B cell (primary cell): ENCODE measurements at regions of chr4 and their contacts with region 1.

Region 1: GRCh38 chr4:187321711-187322110 is 598.1 kb upstream of the FAT1 start:
- DNase-seq: no peak
- ATAC-seq: no peak
- H3K4me3 ChIP-seq: no peak overlapping the region
- H3K4me3 Mint-ChIP-seq: no peak overlapping the region
- H3K27ac ChIP-seq: no peak overlapping the region
- H3K27ac Mint-ChIP-seq: no peak overlapping the region
- H3K4me1 ChIP-seq: no peaks in the 10 kb centered on the region
- H3K4me1 Mint-ChIP-seq: no peaks in the 10 kb centered on the region
- H3K27me3 ChIP-seq: no peaks in the 10 kb centered on the region
- H3K27me3 Mint-ChIP-seq: no peaks in the 10 kb centered on the region
- CTCF ChIP-seq: no peak

Region 2: DNA sequence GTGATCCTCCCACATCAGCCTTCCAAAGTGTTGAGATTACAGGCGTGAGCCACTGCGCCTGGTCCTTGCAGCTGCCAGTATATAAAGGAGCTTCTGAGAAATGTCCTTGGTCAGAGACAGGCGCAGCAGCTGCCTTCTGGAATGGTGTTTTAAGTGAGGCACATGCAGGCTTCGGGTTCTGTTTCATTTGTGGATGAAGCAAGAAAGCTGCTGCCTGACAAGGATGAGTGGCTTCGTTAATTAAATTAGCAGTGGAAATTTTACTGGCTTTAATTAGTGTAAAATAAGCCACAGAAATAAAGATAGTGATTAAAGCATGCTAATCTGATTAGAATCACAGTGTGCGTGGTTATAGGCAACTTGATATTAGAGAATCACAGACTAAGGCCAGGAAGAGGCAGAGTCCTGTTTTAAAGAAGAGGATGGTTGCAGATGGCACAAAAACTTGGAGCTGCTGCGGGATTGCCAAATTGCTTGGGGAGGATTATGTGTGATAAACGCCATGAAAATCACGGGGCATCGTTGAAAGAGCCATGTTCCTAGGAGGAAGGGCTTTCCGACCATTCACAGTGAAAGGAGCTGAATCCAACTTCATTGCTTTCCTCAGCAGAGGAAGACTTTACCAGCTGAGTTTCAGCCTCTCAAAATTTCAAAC is 249.6 kb before region 1 on chr4:
- CTCF ChIA-PET with region 1: no interaction called
- POLR2A ChIA-PET with region 1: no interaction called
- intact Hi-C with region 1: no loop called
- DNase-seq: no peak
- ATAC-seq: no peak
- H3K4me3 ChIP-seq: no peak overlapping the region
- H3K4me3 Mint-ChIP-seq: no peak overlapping the region
- H3K27ac ChIP-seq: no peak overlapping the region
- H3K27ac Mint-ChIP-seq: no peak overlapping the region
- H3K4me1 ChIP-seq: no peaks in the 10 kb centered on the region
- H3K4me1 Mint-ChIP-seq: no peaks in the 10 kb centered on the region
- H3K27me3 ChIP-seq: no peaks in the 10 kb centered on the region
- H3K27me3 Mint-ChIP-seq: no peaks in the 10 kb centered on the region
- CTCF ChIP-seq: no peak

Region 3: GRCh38 chr4:187236209-187236890 is 85.4 kb before region 1 on chr4:
- CTCF ChIA-PET with region 1: no interaction called
- POLR2A ChIA-PET with region 1: interaction called, 10 read pairs
- intact Hi-C with region 1: no loop called
- DNase-seq: no peak
- ATAC-seq: no peak
- H3K4me3 ChIP-seq: no peak overlapping the region
- H3K4me3 Mint-ChIP-seq: no peak overlapping the region
- H3K27ac ChIP-seq: no peak overlapping the region
- H3K27ac Mint-ChIP-seq: no peak overlapping the region
- H3K4me1 ChIP-seq: no peaks in the 10 kb centered on the region
- H3K4me1 Mint-ChIP-seq: no peaks in the 10 kb centered on the region
- H3K27me3 ChIP-seq: no peaks in the 10 kb centered on the region
- H3K27me3 Mint-ChIP-seq: no peaks in the 10 kb centered on the region
- CTCF ChIP-seq: no peak